MCF 10A (cell line): ENCODE measurements at regions of chr19 and their contacts with region 1.

Region 1: GRCh38 chr19:12736995-12737834 is at the start of gene GET3:
- DNase-seq: peak; percentile 100
- H3K4me3 Mint-ChIP-seq: peak within 1 kb of the TSS; percentile 99
- H3K27ac Mint-ChIP-seq: peak within 1 kb of the TSS; percentile 100
- H3K4me1 Mint-ChIP-seq: peaks cover 22% of the 10 kb centered on the region
- H3K27me3 Mint-ChIP-seq: no peaks in the 10 kb centered on the region
- CTCF ChIP-seq: no peak
- total RNA-seq, gene GET3: 62.9 and 67.1 TPM in 2 replicates

Region 2: GRCh38 chr19:12722566-12723380 is 14.4 kb before region 1 on chr19:
- CTCF ChIA-PET with region 1: interaction called, 32 read pairs
- POLR2A ChIA-PET with region 1: interaction called, 235 read pairs
- intact Hi-C with region 1: no loop called
- DNase-seq: peak; percentile 100
- H3K4me3 Mint-ChIP-seq: peak overlapping the region; percentile 96
- H3K27ac Mint-ChIP-seq: peak overlapping the region; percentile 96
- H3K4me1 Mint-ChIP-seq: peaks cover 12% of the 10 kb centered on the region
- H3K27me3 Mint-ChIP-seq: no peaks in the 10 kb centered on the region
- CTCF ChIP-seq: no peak

Region 3: GRCh38 chr19:12749938-12750521 is 12.8 kb after region 1 on chr19:
- CTCF ChIA-PET with region 1: interaction called, 75 read pairs
- POLR2A ChIA-PET with region 1: interaction called, 43 read pairs
- intact Hi-C with region 1: no loop called
- DNase-seq: peak; percentile 42
- H3K4me3 Mint-ChIP-seq: peak overlapping the region; percentile 58
- H3K27ac Mint-ChIP-seq: peak overlapping the region; percentile 76
- H3K4me1 Mint-ChIP-seq: peaks cover 24% of the 10 kb centered on the region
- H3K27me3 Mint-ChIP-seq: no peaks in the 10 kb centered on the region
- CTCF ChIP-seq: no peak

Region 4: GRCh38 chr19:12757544-12758274 is 20.5 kb after region 1 on chr19:
- CTCF ChIA-PET with region 1: interaction called, 75 read pairs
- POLR2A ChIA-PET with region 1: interaction called, 43 read pairs
- intact Hi-C with region 1: loop called (anchors 1 kb)
- DNase-seq: peak; percentile 72
- H3K4me3 Mint-ChIP-seq: peak overlapping the region; percentile 35
- H3K27ac Mint-ChIP-seq: no peak overlapping the region
- H3K4me1 Mint-ChIP-seq: peaks cover 5% of the 10 kb centered on the region
- H3K27me3 Mint-ChIP-seq: no peaks in the 10 kb centered on the region
- CTCF ChIP-seq: peak; percentile 97

Region 5: GRCh38 chr19:12890787-12891552 is 153.8 kb after region 1 on chr19 and contains the start of gene GCDH:
- CTCF ChIA-PET with region 1: no interaction called
- POLR2A ChIA-PET with region 1: interaction called, 10 read pairs
- intact Hi-C with region 1: no loop called
- DNase-seq: peak; percentile 100
- H3K4me3 Mint-ChIP-seq: peak within 1 kb of the TSS; percentile 99
- H3K27ac Mint-ChIP-seq: peak within 1 kb of the TSS; percentile 69
- H3K4me1 Mint-ChIP-seq: peaks cover 16% of the 10 kb centered on the region
- H3K27me3 Mint-ChIP-seq: no peaks in the 10 kb centered on the region
- CTCF ChIP-seq: no peak
- total RNA-seq, gene GCDH: 22.9 and 38.0 TPM in 2 replicates